Right lobe of liver (tissue), 6 donors: ENCODE measurements at regions of chr11 and their contacts with region 1.

Region 1: GRCh38 chr11:61129639-61130523 is 27.6 kb downstream of the CD5 start:
- DNase-seq: peak; percentile 89 to 91 (median 89)
- ATAC-seq: peak; percentile 95 to 99 (median 96)
- H3K4me3 ChIP-seq: no peak overlapping the region
- H3K27ac ChIP-seq: peak overlapping the region in 1 of 3 donors; percentile 4
- H3K4me1 ChIP-seq: peaks cover 0 to 6% (median 0%) of the 10 kb centered on the region in 4 donors
- H3K27me3 ChIP-seq: no peaks in the 10 kb centered on the region
- CTCF ChIP-seq: peak; percentile 98 to 100 (median 100)
- POLR2A ChIP-seq: no peak

Region 2: GRCh38 chr11:60691661-60692060 is 438.2 kb before region 1 on chr11:
- intact Hi-C with region 1: no loop called
- DNase-seq: no peak
- ATAC-seq: no peak
- H3K4me3 ChIP-seq: no peak overlapping the region
- H3K27ac ChIP-seq: no peak overlapping the region
- H3K4me1 ChIP-seq: no peaks in the 10 kb centered on the region
- H3K27me3 ChIP-seq: no peaks in the 10 kb centered on the region
- CTCF ChIP-seq: no peak
- POLR2A ChIP-seq: no peak

Region 3: GRCh38 chr11:60964801-60965200 is 165.1 kb before region 1 on chr11:
- intact Hi-C with region 1: loop called in 1 of 2 experiments (anchors 10 kb)
- DNase-seq: no peak
- ATAC-seq: no peak
- H3K4me3 ChIP-seq: no peak overlapping the region
- H3K27ac ChIP-seq: no peak overlapping the region
- H3K4me1 ChIP-seq: no peaks in the 10 kb centered on the region
- H3K27me3 ChIP-seq: no peaks in the 10 kb centered on the region
- CTCF ChIP-seq: no peak
- POLR2A ChIP-seq: no peak

Region 4: DNA sequence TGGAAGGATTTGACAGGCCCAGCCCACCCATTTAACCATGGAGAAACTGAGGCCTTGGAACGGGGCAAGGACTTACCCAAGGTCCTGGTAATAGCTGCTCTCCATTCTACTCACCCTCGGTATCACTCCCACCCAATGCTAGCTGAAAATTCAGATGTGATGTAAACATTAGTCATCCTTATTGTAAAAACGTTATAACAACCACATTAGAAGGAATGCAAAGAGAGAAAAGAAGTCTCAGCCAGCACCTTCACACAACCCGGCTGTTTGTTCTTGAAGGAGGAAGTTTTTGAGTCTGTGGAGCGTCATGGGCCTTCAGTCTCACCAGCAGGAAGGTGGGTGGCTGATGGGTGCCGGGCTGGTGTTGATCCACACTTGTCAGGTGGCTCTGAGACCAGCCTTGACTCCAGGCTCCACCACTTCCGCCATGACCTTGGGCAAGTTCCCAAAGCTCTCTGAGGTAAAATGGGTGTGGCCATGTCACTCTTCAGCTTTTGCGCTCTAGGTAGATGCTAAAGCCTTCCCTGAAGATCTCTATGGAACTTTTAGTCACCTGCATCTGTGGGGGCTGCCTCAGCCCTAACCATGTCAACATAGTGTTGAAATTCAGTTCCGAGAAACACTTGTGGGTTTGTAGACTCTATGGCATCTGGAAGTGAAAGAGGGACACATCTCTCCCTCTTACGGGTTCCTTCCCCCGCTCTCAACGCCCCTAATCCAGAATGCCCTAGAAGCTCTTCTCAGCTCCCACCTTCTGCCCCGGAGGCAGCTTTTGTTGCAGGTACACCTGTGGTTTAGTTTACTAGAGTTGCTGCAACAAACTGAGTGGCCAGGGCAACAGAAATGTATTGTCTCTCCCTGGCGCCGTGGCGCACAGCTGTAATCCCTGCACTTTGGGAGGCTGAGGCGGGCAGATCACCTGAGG is 143.6 kb before region 1 on chr11:
- intact Hi-C with region 1: loop called in 1 of 2 experiments (anchors 10 kb)
- DNase-seq: no peak
- ATAC-seq: peak; percentile 21 to 36 (median 30)
- H3K4me3 ChIP-seq: no peak overlapping the region
- H3K27ac ChIP-seq: no peak overlapping the region
- H3K4me1 ChIP-seq: no peaks in the 10 kb centered on the region
- H3K27me3 ChIP-seq: no peaks in the 10 kb centered on the region
- CTCF ChIP-seq: no peak
- POLR2A ChIP-seq: no peak

Region 5: DNA sequence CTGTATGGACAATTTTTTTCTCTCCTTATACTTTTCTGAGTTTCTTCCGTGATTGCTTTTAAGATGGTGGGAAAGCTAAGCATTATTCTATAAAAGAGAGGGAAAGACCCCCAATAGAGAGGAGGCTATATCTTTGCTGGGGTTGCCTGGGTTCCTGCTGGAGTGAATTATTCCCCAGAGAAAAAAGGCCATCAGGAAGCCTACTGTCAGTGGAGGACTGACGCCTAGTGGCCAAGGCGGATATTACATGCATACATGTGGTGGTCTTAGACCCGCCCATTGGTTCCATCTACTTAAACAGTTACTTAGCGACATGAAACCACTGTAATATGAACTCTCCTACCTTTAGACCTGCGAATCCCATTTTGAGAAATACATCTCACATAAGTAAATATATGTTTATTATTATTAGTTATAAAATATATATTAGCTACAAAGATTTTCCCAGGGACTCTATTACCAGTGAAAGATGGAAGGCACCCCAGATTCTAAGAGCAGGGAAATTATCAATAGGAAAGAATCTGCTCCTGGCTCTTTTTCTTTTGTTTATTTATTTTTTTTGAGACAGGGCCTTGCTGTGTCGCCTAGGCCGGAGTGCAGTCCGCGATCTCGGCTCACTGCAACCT is 57.7 kb after region 1 on chr11:
- intact Hi-C with region 1: no loop called
- DNase-seq: peak in 2 of 3 donors; percentile 57 to 66
- ATAC-seq: peak; percentile 82 to 90 (median 86)
- H3K4me3 ChIP-seq: no peak overlapping the region
- H3K27ac ChIP-seq: no peak overlapping the region
- H3K4me1 ChIP-seq: no peaks in the 10 kb centered on the region
- H3K27me3 ChIP-seq: no peaks in the 10 kb centered on the region
- CTCF ChIP-seq: peak; percentile 86 to 93 (median 93)
- POLR2A ChIP-seq: no peak